ENCODE measurements at regions of chr2 and their contacts with region 1.

Region 1: GRCh38 chr2:128073278-128073677 is 17.7 kb upstream of the UGGT1 start:
- DNase-seq: no peak
- ATAC-seq: no peak
- H3K4me3 Mint-ChIP-seq: no peak overlapping the region
- H3K27ac Mint-ChIP-seq: no peak overlapping the region
- H3K4me1 Mint-ChIP-seq: peaks cover 8% of the 10 kb centered on the region
- H3K27me3 Mint-ChIP-seq: peaks cover 2% of the 10 kb centered on the region

Region 2: DNA sequence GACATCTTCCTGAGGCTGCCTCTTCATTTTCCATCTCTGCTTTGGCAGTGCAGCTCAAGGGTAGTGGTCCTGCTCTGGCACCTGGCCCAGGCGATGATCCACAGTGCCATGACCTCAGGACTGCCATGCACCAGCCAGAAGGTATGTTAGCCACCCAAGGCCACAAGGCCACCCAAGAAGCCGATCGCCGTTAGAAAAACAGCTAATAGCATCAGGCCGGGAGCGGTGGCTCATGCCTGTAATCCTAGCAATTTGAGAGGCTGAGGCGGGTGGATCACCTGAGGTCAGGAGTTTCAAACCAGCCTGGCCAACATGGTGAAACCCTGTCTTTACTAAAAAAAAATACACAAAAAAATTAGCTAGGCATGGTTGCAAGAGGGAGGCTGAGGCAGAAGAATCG is 10.7 kb before region 1 on chr2:
- CTCF ChIA-PET with region 1: interaction called, 10 read pairs
- DNase-seq: no peak
- ATAC-seq: no peak
- H3K4me3 Mint-ChIP-seq: no peak overlapping the region
- H3K27ac Mint-ChIP-seq: no peak overlapping the region
- H3K4me1 Mint-ChIP-seq: no peaks in the 10 kb centered on the region
- H3K27me3 Mint-ChIP-seq: peaks cover 5% of the 10 kb centered on the region